ENCODE measurements at regions of chr4 and their contacts with region 1.

Region 1: GRCh38 chr4:154551872-154552686 is 1.9 kb upstream of the PLRG1 start:
- DNase-seq: peak in 1 of 2 experiments; percentile 54
- H3K4me3 ChIP-seq: no peak overlapping the region
- H3K27ac ChIP-seq: no peak overlapping the region
- H3K4me1 ChIP-seq: no peaks in the 10 kb centered on the region; a peak in 1 of 7 replicates
- H3K27me3 ChIP-seq: no peaks in the 10 kb centered on the region; a peak in 1 of 7 replicates
- CTCF ChIP-seq: peak; percentile 69 to 76 (median 69)
- EP300 ChIP-seq: no peak
- POLR2A ChIP-seq: no peak
- RAD21 ChIP-seq: peak; percentile 86 to 87

Region 2: DNA sequence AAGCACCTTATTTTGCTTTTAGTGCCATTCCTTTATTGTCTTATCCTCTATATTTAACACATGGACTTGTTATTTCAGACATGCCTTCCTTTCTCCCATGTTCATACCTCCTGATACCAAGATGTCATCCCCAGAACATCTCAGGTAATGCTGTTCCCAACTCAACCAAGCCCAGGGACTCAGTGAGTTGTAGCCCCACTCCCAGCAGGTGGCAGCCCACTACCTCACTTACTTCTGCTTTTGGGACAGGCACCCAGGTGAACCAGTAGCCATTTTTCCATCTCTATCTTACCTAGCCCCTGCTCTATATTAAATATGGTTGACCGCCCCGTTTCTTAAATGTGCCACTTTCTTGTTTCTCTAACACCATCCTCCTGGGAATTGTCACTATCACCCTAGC is 259.5 kb before region 1 on chr4:
- CTCF ChIA-PET with region 1: no interaction called
- POLR2A ChIA-PET with region 1: no interaction called
- DNase-seq: no peak
- H3K4me3 ChIP-seq: no peak overlapping the region
- H3K27ac ChIP-seq: no peak overlapping the region
- H3K4me1 ChIP-seq: no peaks in the 10 kb centered on the region
- H3K27me3 ChIP-seq: no peaks in the 10 kb centered on the region
- CTCF ChIP-seq: no peak
- EP300 ChIP-seq: no peak
- POLR2A ChIP-seq: no peak
- RAD21 ChIP-seq: peak; percentile 15 to 32; a peak in 3 of 4 replicates

Region 3: DNA sequence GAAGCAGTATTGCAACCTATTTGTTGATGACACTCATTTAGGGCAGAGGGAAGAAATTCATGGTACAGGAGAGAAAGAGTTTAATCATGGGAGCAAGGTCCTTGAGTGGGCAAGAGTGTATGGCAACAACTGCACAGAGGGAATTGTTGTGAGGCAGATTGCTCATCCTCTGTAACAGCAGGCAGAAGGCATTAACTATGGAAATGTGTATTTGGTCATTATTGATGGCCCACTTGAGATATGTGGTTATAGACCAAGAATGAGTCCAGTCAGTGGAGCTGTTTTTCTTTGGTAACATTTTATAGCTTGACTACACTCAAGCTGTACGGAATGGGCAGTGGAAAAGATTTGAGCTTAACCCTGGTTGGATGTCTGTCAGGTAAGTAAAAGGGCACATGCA is 17.8 kb before region 1 on chr4:
- CTCF ChIA-PET with region 1: interaction called, 5 read pairs
- POLR2A ChIA-PET with region 1: interaction called, 10 read pairs
- DNase-seq: no peak
- H3K4me3 ChIP-seq: no peak overlapping the region
- H3K27ac ChIP-seq: no peak overlapping the region
- H3K4me1 ChIP-seq: no peaks in the 10 kb centered on the region
- H3K27me3 ChIP-seq: no peaks in the 10 kb centered on the region
- CTCF ChIP-seq: no peak
- EP300 ChIP-seq: no peak
- POLR2A ChIP-seq: no peak
- RAD21 ChIP-seq: no peak

Region 4: DNA sequence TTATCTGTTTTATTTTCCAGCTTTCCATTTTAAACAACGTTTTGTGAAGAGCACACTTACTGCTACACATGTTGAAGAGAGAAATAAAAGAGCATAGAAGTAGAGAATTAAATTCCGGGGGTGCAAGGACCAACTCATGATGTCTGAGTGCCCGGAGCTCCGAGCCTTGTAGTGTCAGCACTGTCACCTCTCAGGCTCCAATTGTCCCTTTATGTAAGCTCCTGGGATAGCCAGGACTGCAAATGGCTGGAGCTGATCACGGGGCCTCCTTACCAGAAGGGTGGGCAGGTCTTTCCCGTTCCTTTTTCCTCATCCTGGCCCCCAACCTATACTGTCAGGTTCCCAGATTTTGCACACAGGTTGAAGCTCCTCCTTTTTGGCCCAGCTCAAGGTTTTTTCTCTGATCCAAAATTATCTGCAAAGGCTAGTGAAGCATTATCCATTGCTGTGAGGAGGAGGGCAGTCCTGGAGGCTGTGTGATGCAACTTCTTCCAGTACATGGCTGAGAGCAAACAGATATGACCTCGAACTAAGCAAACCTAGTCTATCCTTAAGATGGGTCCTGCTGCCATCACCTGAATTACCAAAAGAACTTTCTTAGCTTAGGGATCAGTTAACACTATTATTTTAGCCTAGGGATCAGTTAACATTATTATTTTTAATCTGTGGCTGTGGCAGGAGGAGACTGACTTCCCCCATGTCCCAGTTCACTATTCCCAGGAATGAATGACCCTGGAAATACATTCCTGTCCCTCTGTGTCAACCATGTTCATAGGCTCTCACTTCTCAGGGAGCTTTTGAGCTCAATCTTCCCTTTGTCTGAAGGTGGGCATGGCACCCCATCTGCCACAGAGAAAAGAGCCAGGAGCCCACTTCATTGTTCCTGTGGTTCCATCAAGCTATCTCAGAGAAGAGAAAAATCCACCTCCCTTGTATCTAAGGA is 60.7 kb after region 1 on chr4 and contains the start of gene FGG:
- CTCF ChIA-PET with region 1: interaction called, 283 read pairs
- POLR2A ChIA-PET with region 1: interaction called, 3 read pairs
- DNase-seq: no peak
- H3K4me3 ChIP-seq: no peak within 1 kb of the TSS
- H3K27ac ChIP-seq: no peak within 1 kb of the TSS
- H3K4me1 ChIP-seq: no peaks in the 10 kb centered on the region
- H3K27me3 ChIP-seq: peaks cover 0 to 1% (median 0%) of the 10 kb centered on the region in 4 experiments; a peak in 1 of 7 replicates
- CTCF ChIP-seq: no peak
- EP300 ChIP-seq: no peak
- POLR2A ChIP-seq: no peak
- RAD21 ChIP-seq: no peak
- total RNA-seq, gene FGG: not detected in 2 replicates

Region 5: DNA sequence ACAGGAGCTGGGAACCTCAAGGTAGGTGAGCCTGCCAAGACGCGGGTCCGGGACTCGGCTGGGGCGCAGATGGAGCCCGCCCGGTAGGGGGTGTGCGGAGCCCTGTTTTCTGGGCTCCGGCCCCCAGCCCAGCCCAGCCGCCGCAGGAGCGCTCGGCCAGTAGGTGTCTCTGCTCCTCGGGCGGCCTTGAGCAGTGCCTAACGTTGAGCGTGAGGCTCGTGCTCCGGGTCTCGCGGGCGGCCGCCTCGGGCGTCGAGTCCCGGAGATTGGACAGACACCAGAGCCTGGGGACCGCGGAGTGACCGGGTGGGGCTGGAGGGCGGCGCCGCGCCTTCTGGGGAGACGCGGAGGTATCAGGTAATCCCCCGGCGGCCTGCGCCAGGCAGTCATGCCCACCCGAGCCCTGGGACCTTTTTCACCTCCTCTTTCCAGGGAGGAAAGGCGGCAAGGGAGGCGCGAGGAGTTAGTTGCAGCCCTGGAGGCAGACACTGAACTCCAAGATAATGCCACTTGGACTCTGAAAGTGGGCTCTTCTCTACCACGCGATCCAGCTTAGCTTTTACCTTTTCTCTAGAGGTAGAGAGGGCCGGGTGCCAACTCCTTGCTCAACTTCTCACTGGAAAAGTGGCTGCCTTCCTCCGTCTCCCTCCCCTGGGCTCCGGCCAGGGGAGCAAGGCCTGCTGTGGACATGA is 74.9 kb after region 1 on chr4:
- CTCF ChIA-PET with region 1: interaction called, 283 read pairs
- POLR2A ChIA-PET with region 1: interaction called, 13 read pairs
- DNase-seq: peak; percentile 62 to 80
- H3K4me3 ChIP-seq: peak overlapping the region; percentile 49 to 69 (median 50)
- H3K27ac ChIP-seq: no peak overlapping the region
- H3K4me1 ChIP-seq: peaks cover 0 to 6% (median 1%) of the 10 kb centered on the region in 4 experiments; a peak in 2 of 7 replicates
- H3K27me3 ChIP-seq: peaks cover 1 to 22% (median 11%) of the 10 kb centered on the region in 4 experiments
- CTCF ChIP-seq: peak; percentile 66 to 96 (median 71)
- EP300 ChIP-seq: no peak
- POLR2A ChIP-seq: no peak
- RAD21 ChIP-seq: peak; percentile 60 to 68

Measured in H1 (cell line).